ENCODE measurements at regions of chr7 and their contacts with region 1.

Region 1: DNA sequence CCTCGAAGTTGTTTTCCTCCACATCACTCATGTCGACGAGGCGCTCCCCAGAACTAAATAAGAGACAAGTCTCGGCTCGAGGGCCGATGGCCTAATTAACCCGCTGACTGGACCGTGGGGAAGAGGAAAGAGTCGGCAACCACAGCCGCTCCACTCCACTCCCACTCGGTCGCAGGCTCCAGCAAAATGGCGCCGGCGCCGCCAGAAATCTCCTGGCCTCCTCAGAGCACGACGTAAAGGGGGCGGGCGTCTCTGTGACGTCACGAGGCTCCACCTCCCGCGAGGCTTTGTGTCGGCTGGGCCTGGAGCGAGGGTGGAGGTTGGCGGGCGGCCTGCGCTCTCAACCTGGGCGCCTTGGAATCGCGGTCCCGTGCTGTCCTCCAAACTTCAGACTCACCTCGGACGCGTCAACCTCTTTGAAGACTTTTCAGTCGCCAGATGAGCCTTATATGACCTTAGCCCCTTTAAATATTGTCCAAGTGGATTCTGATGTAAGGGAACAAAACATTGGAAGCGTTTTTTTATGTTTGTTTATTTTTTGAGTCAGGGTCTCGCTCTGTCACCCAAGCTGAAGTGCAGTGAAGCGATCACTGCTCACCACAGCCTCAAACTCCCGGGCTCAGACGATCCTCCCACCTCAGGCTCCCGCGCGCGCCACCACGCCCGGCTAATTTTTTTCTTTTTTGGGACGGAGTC is at the start of gene TRA2A:
- DNase-seq: peak; percentile 98
- ATAC-seq: peak; percentile 93
- H3K4me3 Mint-ChIP-seq: peak within 1 kb of the TSS; percentile 96
- H3K27ac Mint-ChIP-seq: peak within 1 kb of the TSS; percentile 100
- H3K4me1 Mint-ChIP-seq: peaks cover 41% of the 10 kb centered on the region
- H3K27me3 Mint-ChIP-seq: no peaks in the 10 kb centered on the region
- total RNA-seq, gene TRA2A: 86.8 to 143 TPM

Region 2: DNA sequence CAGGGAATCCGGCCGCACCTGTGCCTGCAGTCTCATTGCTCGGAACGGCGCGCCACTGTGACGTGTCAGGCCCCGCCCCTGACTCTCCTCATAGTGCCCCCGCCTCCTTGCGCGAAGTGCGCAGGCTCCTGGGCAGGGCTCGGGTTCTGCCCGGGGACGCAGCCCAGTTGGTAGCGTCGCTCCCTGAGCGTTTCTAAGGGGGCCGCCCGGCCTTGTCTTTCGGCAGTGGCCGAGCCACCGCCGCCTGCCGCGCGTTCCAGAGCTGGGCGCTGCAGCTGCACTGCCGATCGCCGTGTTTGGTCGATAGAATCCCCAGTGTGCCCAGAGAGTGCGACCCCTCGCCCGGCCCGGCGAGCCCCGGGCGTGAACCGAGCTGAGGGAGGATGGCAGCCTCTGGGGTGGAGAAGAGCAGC is 426.3 kb before region 1 on chr7 and contains the start of gene KLHL7:
- CTCF ChIA-PET with region 1: no interaction called
- POLR2A ChIA-PET with region 1: no interaction called
- intact Hi-C with region 1: loop called (anchors 2 to 10 kb)
- DNase-seq: peak; percentile 98
- ATAC-seq: peak; percentile 98
- H3K4me3 Mint-ChIP-seq: peak within 1 kb of the TSS; percentile 97
- H3K27ac Mint-ChIP-seq: peak within 1 kb of the TSS; percentile 94
- H3K4me1 Mint-ChIP-seq: peaks cover 32% of the 10 kb centered on the region
- H3K27me3 Mint-ChIP-seq: no peaks in the 10 kb centered on the region
- total RNA-seq, gene KLHL7: 18.1 to 20.8 TPM

Region 3: DNA sequence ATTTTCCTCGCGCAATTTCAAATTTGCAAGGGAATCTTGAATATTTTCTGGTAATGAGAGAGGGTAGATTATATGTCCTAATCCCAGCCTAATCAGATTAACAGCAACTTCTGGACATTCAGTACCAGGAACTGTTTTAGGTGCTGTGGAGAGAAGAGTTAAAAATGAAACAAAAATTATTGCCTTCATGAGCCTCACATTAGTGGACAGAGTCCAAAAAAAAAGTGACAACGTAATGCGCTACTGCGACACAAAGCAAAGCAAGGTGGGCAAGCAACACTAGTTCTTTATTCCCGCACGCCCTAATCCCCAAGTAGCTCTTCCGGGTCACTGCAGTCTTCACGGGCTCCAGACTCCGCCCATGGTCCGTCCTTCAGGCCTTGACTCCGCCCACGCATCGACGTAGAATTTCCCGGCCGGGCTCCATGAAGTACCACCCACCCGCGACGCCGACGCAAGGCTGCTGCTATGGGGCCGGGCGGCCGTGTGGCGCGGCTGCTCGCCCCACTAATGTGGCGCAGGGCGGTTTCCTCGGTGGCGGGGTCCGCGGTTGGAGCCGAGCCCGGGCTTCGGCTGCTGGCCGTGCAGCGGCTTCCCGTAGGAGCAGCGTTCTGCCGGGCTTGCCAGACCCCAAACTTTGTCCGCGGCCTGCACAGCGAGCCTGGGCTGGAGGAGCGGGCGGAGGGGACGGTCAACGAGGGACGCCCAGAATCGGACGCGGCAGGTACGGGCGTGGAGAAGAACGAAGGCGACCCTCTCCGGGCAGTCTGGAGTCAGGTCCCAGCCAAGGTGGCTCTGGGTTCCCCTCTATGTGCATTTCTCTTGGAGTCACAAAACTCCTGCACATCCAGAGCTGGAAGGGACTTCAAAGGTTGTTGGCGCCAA is 232.8 kb before region 1 on chr7 and contains the start of gene MALSU1:
- CTCF ChIA-PET with region 1: interaction called, 3 read pairs
- POLR2A ChIA-PET with region 1: interaction called, 5 read pairs
- intact Hi-C with region 1: loop called (anchors 1 kb)
- DNase-seq: peak; percentile 99
- ATAC-seq: peak; percentile 97
- H3K4me3 Mint-ChIP-seq: peak within 1 kb of the TSS; percentile 98
- H3K27ac Mint-ChIP-seq: peak within 1 kb of the TSS; percentile 97
- H3K4me1 Mint-ChIP-seq: peaks cover 38% of the 10 kb centered on the region
- H3K27me3 Mint-ChIP-seq: no peaks in the 10 kb centered on the region
- total RNA-seq, gene MALSU1: 97.7 to 98.4 TPM

Region 4: GRCh38 chr7:23373151-23374004 is 158.6 kb before region 1 on chr7:
- CTCF ChIA-PET with region 1: no interaction called
- POLR2A ChIA-PET with region 1: interaction called, 6 read pairs
- intact Hi-C with region 1: loop called in 1 of 2 experiments (anchors 1 kb)
- DNase-seq: peak; percentile 80
- ATAC-seq: peak; percentile 84
- H3K4me3 Mint-ChIP-seq: peak overlapping the region; percentile 16
- H3K27ac Mint-ChIP-seq: peak overlapping the region; percentile 84
- H3K4me1 Mint-ChIP-seq: peaks cover 65% of the 10 kb centered on the region
- H3K27me3 Mint-ChIP-seq: peaks cover 10% of the 10 kb centered on the region

Region 5: GRCh38 chr7:23490357-23491135 is 41.4 kb before region 1 on chr7:
- CTCF ChIA-PET with region 1: no interaction called
- POLR2A ChIA-PET with region 1: no interaction called
- intact Hi-C with region 1: loop called in 1 of 2 experiments (anchors 1 kb)
- DNase-seq: peak; percentile 67
- ATAC-seq: peak; percentile 87
- H3K4me3 Mint-ChIP-seq: peak overlapping the region; percentile 78
- H3K27ac Mint-ChIP-seq: peak overlapping the region; percentile 83
- H3K4me1 Mint-ChIP-seq: peaks cover 2% of the 10 kb centered on the region
- H3K27me3 Mint-ChIP-seq: no peaks in the 10 kb centered on the region

Region 6: GRCh38 chr7:23679898-23680413 is 148.0 kb after region 1 on chr7 and contains the start of gene FAM221A:
- CTCF ChIA-PET with region 1: interaction called, 5 read pairs
- POLR2A ChIA-PET with region 1: no interaction called
- intact Hi-C with region 1: loop called in 1 of 2 experiments (anchors 1 kb)
- DNase-seq: peak; percentile 93
- ATAC-seq: peak; percentile 98
- H3K4me3 Mint-ChIP-seq: peak within 1 kb of the TSS; percentile 85
- H3K27ac Mint-ChIP-seq: peak within 1 kb of the TSS; percentile 76
- H3K4me1 Mint-ChIP-seq: peaks cover 8% of the 10 kb centered on the region
- H3K27me3 Mint-ChIP-seq: no peaks in the 10 kb centered on the region
- total RNA-seq, gene FAM221A: 5.3 to 8.1 TPM

Measured in activated CD4-positive, alpha-beta T cell treated with anti-CD3 and anti-CD28 coated beads for 36 hours (primary cell).